Breast epithelium (tissue), 4 donors: ENCODE measurements at regions of chr12 and their contacts with region 1.

Region 1: DNA sequence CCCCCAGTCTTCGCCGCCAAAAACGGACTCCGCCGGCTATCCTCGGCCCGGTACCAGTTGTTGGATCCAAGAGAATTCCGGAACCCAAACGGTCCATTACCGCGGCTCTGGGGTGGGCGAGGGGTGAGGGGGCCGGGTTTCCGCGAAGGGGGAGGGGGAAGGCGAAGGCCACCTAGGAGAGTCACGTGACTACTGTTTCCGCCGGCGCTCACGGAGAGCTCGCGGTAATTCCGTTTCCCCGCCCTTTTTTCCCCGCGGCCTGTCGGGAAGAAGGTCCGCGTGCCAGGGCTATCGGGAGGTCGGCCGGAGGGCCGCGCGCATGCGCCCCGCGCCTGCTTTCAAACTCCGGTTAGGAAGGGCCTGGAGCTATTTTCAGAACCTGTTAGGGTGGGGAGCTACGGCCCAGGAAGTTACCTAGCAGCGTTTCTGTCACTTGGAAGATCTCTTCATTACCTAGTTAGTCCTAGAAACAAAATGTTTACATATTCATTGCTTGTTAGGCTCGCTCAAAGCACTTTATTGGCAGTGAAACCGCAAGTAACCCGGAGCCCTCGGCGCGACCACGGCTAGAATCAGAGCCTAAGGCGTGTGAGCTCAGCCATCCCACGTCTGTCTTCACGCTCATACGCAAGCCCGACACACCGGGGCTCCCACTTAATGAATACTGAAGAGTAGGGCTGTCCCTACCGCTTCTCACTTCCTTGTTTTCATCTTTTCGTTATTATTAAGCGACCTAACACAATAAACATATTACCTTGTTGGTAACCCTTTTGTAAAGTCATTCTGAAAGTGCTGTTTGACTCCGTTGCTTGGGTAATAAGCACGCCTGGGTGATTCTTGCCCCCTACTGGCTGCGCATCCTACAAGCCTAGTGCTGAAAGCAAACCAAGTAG is 624 bp upstream of the SBNO1 start:
- DNase-seq: peak; percentile 98 to 99
- H3K4me3 ChIP-seq: peak overlapping the region; percentile 82 to 89 (median 85)
- H3K27ac ChIP-seq: peak overlapping the region; percentile 96 to 97
- H3K4me1 ChIP-seq: peaks cover 0 to 10% of the 10 kb centered on the region in 2 donors
- H3K27me3 ChIP-seq: no peaks in the 10 kb centered on the region
- CTCF ChIP-seq: peak; percentile 77 to 87 (median 86)
- POLR2A ChIP-seq: peak; percentile 75

Region 2: DNA sequence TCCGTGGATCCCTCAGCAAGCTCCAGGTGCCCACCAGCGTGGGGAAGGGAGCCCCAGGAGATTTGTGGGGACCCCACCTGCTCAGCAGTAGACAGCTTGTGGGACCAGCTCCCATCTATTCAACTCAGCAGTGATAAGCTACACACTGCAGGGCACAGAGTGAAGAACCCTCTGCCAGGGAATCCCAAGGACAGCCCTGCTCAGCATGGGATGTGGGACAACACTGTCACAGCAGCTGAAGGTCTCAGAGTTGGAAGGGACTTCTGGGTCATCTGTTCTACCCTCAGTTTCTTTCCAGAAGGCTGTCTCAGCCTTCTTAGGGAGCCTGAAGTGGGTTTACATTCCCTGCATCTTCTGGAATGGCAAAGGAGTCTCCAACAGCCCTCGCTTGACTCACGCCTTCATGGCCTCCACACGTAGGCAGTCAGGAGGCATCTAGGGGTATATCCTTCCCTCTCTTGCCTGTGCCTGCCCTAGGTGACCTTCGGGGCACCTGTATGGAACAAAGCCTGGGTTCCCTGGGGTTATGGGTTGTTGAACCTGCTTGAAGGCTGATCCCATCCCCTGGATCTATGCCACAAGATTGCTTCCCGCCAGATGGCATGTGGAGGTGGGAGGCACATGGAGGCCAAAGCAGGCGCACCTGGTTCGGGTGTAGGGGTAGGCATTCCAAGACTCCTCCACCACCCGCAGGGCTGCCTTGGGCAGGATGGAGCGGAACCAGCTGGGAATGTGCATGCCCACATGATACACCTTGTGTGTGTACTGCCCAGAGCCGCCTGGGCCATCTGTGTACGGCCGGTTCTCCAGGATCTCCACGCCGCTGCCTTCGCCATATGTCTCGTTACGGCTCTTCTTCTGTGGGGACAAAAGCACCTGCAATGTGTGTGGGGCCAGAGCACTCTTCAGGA is 351.8 kb before region 1 on chr12:
- intact Hi-C with region 1: loop called (anchors 5 kb)
- DNase-seq: no peak
- H3K4me3 ChIP-seq: no peak overlapping the region
- H3K27ac ChIP-seq: no peak overlapping the region
- H3K4me1 ChIP-seq: no peaks in the 10 kb centered on the region
- H3K27me3 ChIP-seq: no peaks in the 10 kb centered on the region
- CTCF ChIP-seq: no peak
- POLR2A ChIP-seq: no peak

Region 3: GRCh38 chr12:123329799-123330198 is 35.5 kb before region 1 on chr12:
- intact Hi-C with region 1: no loop called
- DNase-seq: no peak
- H3K4me3 ChIP-seq: no peak overlapping the region
- H3K27ac ChIP-seq: no peak overlapping the region
- H3K4me1 ChIP-seq: no peaks in the 10 kb centered on the region
- H3K27me3 ChIP-seq: no peaks in the 10 kb centered on the region
- CTCF ChIP-seq: no peak
- POLR2A ChIP-seq: no peak

Region 4: DNA sequence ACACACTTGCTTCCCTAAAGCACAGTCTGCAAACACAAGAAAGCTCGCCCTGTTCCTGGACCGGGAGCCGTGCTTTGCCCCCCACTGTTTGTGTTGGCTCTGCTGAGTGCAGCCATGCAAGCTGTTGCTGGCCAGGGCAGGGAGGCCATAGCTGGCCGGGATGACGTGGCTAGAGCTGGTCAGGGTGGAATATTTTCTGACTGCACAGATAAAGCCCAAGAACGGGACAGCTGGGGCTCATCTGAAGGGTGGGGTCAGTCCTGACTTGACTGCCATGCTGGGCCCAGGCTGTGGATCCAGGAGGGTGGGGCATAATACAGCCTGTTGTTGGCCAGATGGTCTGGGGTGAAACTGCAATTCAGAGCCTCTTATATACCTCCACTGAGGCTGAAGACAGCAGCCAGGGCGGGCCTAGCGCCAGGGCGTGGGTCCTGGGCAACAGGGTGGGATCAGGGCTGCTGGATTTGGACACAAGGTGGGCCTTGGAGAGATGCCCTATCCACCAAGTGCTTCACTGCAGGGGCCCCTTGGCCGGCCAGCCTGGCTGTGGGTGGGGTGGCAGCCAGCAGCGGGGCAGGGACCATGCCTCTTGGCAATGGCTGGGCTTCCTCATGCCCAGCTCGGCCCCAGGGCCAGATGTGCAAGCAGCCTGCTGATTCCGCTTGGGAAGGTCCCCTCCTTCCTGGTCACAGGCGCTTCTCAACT is 33.4 kb after region 1 on chr12:
- intact Hi-C with region 1: no loop called
- DNase-seq: no peak
- H3K4me3 ChIP-seq: peak overlapping the region in 1 of 3 donors; percentile 4
- H3K27ac ChIP-seq: peak overlapping the region; percentile 20 to 84
- H3K4me1 ChIP-seq: peaks cover 9 to 12% of the 10 kb centered on the region in 2 donors
- H3K27me3 ChIP-seq: no peaks in the 10 kb centered on the region
- CTCF ChIP-seq: no peak
- POLR2A ChIP-seq: no peak